ENCODE measurements at regions of chr3 and their contacts with region 1.

Region 1: GRCh38 chr3:138915503-138916498 is 31.1 kb downstream of the FOXL2 start:
- DNase-seq: peak; percentile 92
- CTCF ChIP-seq: peak; percentile 95

Region 2: DNA sequence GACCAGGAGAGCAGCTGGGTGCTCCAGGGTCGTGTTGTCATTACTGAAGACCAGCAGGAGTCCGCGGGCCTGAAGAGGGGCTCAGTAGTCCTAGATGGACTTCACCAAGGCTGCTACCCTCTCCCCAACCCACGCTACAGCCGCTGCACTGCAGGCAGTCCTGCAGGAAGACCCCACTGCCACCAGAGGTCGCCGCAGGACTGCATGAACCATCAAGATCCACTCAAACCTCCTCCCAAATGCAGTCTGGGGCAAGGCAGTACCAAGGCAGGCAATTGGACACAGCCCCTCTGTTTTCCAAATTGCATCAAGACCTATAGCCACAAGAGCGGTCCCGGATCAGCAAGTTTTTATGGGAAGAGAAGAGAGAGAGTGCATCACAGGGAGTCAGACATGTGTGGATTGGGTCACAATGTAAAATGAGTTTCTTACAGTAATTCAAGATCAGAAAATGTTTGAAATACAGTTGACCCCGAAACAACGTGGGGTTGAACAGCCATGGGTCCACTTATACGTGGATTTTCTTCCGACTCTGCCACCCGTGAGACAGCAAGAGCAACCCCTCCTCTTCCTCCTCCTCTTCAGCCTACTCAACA is 847.1 kb before region 1 on chr3:
- in situ Hi-C with region 1: loop called (anchors 25 kb)
- DNase-seq: peak; percentile 84
- CTCF ChIP-seq: peak; percentile 99

Region 3: DNA sequence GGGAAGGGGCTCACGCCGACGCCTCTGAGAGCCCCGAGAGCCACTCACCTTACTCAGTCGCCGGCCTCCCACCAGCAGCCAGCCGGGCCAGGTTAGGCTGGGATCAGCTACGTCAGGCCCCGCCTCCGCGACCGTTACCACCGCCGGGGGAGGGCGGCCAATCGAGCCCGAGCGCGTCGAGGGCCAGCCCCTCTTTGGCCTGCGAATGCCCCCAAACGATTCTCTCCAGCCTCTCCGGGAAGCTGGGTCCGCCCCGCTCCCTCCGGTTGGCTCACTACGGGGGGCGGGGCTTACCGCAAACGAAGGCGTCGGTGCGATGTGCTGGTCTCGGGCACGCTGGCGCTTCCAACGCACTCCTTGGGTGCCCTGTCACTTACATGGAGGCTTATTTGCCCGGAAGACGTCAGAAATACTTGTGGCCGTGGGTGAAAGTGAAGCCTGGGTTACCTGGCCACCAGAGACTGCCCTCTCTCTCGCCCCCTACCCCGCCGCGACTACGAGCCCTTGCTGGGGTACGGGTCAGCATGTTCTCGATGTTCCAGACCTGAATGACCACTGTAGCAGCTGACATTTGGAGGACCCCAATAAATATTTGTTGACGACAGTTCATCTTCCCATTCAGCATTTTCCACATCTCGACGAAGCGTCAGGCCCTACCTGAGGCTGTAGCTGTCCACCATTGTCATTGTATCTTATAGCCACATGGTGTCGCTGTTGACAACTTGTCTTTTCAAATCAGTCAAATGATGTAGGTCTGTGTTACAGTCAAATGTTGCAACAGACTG is 321.5 kb before region 1 on chr3 and contains the start of gene CEP70:
- in situ Hi-C with region 1: loop called (anchors 10 kb)
- DNase-seq: peak; percentile 84
- CTCF ChIP-seq: peak; percentile 82

Region 4: DNA sequence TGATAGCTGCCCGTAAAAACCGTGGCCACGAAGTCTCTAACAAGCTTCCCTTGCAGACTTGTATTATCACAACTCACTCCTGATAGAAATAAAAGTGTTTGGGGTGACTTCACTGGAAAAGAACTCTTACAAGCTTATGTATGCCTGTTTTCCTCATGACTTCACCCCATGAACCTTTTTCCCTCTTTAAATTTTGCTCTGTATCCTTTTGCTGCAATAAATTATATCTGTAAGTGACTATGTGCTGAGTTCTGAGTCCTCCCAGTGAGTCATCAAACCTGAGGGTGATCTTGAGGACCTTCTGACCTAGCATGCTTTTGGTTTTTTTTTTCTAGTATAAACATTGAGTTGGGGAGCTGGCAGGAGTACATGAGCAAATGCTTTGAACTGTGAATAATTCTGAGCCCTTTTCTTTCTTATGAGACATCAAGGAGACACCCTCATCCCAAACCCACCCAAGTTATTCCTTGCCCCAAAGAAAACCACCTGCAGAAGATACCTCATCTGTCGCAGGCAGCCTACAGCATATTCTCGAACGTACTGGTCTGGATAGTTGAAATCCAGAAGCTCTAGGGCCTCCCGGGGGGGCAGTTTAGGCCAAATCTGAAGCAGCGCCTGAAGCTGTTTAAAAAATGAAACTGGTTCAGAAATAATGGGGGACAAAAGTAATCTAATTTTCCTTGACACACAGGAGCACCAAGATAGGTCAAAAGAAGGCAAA is 221.4 kb before region 1 on chr3:
- in situ Hi-C with region 1: loop called (anchors 5 kb)
- DNase-seq: no peak
- CTCF ChIP-seq: no peak

Region 5: GRCh38 chr3:139044366-139045210 is 128.8 kb after region 1 on chr3 and contains the start of gene PRR23C:
- in situ Hi-C with region 1: no loop called
- DNase-seq: peak; percentile 13
- CTCF ChIP-seq: no peak

Measured in GM13977 (cell line).